BJ (cell line): ENCODE measurements at regions of chr1 and their contacts with region 1.

Region 1: DNA sequence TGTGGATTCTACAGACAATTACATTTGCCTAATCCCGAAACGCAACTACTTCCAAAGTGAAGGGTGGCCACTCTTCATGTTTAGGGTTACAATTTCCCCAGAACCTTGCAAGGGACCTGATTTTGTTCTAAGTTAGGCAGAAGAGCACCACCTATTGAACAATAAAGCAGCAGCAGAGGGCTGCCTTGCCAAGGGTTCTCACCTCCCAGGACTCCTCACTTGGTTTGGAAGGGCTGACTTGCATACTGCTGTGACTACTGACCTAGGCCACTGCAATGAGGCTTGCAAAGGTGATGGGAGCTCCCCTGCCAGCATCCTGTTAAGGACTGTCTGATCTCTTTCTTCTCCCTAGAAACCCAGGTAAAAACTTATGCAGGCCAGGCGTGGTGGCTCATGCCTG is 14.2 kb downstream of the MTOR start:
- DNase-seq: no peak
- H3K4me3 ChIP-seq: no peak overlapping the region
- H3K27me3 ChIP-seq: no peaks in the 10 kb centered on the region
- CTCF ChIP-seq: no peak

Region 2: GRCh38 chr1:10765734-10766478 is 482.2 kb before region 1 on chr1:
- CTCF ChIA-PET with region 1: no interaction called
- POLR2A ChIA-PET with region 1: no interaction called
- DNase-seq: no peak
- H3K4me3 ChIP-seq: no peak overlapping the region
- H3K27me3 ChIP-seq: peaks cover 6% of the 10 kb centered on the region
- CTCF ChIP-seq: no peak

Region 3: GRCh38 chr1:11227106-11228077 is 20.8 kb before region 1 on chr1:
- CTCF ChIA-PET with region 1: interaction called, 11 read pairs
- POLR2A ChIA-PET with region 1: no interaction called
- DNase-seq: no peak
- H3K4me3 ChIP-seq: no peak overlapping the region
- H3K27me3 ChIP-seq: no peaks in the 10 kb centered on the region
- CTCF ChIP-seq: no peak

Region 4: GRCh38 chr1:11281518-11282331 is 33.6 kb after region 1 on chr1:
- CTCF ChIA-PET with region 1: no interaction called
- POLR2A ChIA-PET with region 1: no interaction called
- DNase-seq: peak; percentile 39
- H3K4me3 ChIP-seq: no peak overlapping the region
- H3K27me3 ChIP-seq: no peaks in the 10 kb centered on the region
- CTCF ChIP-seq: no peak